CD8-positive, alpha-beta T cell (primary cell): ENCODE measurements at regions of chr3 and their contacts with region 1.

Region 1: DNA sequence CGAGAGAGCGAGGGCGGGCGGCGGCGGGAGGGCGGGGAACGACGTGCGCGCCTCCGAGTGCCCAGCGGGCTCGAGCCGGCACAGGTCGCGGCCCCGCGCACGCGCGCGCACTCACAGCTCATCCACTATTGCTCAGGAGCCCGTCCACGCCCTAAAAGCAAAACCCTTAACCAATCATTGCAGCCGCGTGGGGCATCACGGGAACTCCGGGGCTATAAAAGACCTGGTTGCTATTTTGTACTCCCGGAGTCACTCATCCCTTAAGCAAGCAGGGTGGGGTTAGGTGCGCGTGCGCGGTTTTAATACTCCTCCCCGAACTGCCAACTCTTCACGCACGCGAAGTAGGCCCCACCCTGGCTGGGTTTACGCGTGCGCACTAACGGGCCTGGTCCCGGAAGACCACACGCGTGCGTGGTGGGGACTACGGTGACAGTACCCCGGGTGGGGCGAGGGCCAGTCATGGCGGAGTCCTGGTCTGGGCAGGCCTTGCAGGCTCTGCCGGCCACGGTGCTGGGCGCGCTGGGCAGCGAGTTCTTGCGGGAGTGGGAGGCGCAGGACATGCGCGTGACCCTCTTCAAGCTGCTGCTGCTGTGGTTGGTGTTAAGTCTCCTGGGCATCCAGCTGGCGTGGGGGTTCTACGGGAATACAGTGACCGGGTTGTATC is at the starts of genes RHOA and TCTA:
- DNase-seq: peak; percentile 97 to 100 (median 99)
- ATAC-seq: peak; percentile 85
- H3K4me3 ChIP-seq: peak within 1 kb of the TSS; percentile 81 to 91
- H3K4me3 Mint-ChIP-seq: peak within 1 kb of the TSS; percentile 94
- H3K27ac ChIP-seq: peak within 1 kb of the TSS; percentile 89 to 94
- H3K27ac Mint-ChIP-seq: peak within 1 kb of the TSS; percentile 98
- H3K4me1 ChIP-seq: peaks cover 70% of the 10 kb centered on the region
- H3K4me1 Mint-ChIP-seq: peaks cover 70% of the 10 kb centered on the region
- H3K27me3 ChIP-seq: no peaks in the 10 kb centered on the region
- H3K27me3 Mint-ChIP-seq: no peaks in the 10 kb centered on the region
- CTCF ChIP-seq: no peak
- total RNA-seq, gene RHOA: 271 to 294 TPM
- total RNA-seq, gene TCTA: 19.8 to 21.1 TPM

Region 2: DNA sequence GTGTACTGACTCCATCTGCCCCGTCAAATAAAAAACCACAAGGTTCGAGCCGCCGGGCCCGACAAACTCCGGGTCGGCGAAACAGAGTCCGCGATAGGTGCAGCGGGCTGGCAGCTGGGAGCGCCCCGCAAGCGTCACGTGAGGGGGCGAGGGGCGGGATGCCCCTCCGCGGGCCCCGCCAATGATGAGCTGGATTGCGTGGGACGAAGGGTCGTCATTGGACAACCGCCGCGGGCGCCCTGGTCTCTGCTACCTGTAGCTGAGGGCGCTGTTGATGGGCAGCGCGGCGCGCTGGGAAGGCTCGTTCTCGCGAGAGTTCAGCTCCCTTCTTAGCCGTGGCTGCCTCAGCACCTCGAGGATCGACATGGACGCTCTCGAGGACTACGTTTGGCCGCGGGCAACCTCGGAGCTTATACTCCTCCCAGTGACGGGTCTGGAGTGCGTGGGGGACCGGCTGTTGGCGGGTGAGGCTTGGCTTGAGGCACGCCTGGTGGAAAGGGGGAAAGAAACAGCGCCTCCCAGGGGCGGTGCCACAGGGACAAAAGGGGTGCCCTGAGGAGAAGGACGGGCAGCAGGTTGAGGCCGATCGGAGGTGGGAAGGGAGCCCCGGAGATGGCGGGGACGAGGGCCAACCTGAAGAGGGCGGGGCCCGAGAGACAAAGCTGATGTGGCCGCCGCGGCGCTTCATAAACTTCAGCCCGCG is 404.9 kb before region 1 on chr3 and contains the start of gene WDR6:
- CTCF ChIA-PET with region 1: no interaction called
- POLR2A ChIA-PET with region 1: no interaction called
- intact Hi-C with region 1: no loop called
- DNase-seq: peak; percentile 94 to 99 (median 96)
- ATAC-seq: peak; percentile 87
- H3K4me3 ChIP-seq: peak within 1 kb of the TSS; percentile 87 to 92
- H3K4me3 Mint-ChIP-seq: peak within 1 kb of the TSS; percentile 100
- H3K27ac ChIP-seq: peak within 1 kb of the TSS; percentile 81 to 92
- H3K27ac Mint-ChIP-seq: peak within 1 kb of the TSS; percentile 99
- H3K4me1 ChIP-seq: peaks cover 15% of the 10 kb centered on the region
- H3K4me1 Mint-ChIP-seq: peaks cover 30% of the 10 kb centered on the region
- H3K27me3 ChIP-seq: no peaks in the 10 kb centered on the region
- H3K27me3 Mint-ChIP-seq: no peaks in the 10 kb centered on the region
- CTCF ChIP-seq: peak; percentile 34
- total RNA-seq, gene WDR6: 112 to 130 TPM

Region 3: DNA sequence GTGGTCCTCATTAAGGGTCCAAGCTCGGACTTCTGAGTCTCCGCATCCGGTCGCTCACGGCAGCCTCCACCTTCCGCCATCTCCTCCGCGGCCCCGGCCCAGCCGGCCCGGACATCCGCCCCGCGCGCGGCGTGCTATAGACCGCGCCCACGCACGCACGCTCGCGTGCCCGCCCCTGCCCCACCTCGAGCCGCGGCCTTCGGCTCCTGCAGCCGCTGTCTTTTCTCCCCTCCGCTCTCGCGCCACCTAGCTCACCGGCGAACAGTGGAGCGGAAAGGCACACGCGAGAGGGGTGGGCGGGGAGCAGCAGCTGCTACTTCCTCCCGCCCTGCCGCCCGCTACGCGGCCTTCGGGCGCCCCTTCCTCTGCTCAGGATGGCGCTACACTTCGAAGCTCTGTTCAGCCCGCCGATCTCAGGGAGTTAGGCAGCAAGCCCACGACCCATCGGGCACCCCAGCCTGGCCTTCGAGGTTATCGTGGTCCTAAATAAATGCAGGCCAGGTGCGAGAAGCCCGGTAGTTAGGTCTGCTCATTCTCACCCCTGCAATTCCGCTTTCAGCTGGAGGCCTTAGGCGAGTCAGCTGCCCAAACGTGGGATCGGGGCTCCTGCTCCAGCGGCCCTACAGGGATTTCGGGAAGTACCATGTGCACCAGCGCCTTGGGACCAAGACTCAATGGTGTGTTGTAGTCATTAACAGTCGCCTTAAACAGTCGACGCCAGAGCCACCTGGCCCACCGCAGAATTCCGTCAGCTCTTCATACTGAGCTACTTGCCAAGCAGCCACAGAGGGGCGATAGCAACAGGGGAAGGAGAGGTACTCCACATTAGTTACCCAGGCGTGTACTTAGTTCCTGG is 71.9 kb before region 1 on chr3 and contains the start of gene USP4:
- CTCF ChIA-PET with region 1: interaction called, 7 read pairs
- POLR2A ChIA-PET with region 1: interaction called, 43 read pairs
- intact Hi-C with region 1: loop called (anchors 1 kb)
- DNase-seq: peak; percentile 79 to 97 (median 90)
- ATAC-seq: peak; percentile 85
- H3K4me3 ChIP-seq: peak within 1 kb of the TSS; percentile 78 to 89
- H3K4me3 Mint-ChIP-seq: peak within 1 kb of the TSS; percentile 93
- H3K27ac ChIP-seq: peak within 1 kb of the TSS; percentile 98
- H3K27ac Mint-ChIP-seq: peak within 1 kb of the TSS; percentile 96
- H3K4me1 ChIP-seq: peaks cover 40% of the 10 kb centered on the region
- H3K4me1 Mint-ChIP-seq: peaks cover 48% of the 10 kb centered on the region
- H3K27me3 ChIP-seq: no peaks in the 10 kb centered on the region
- H3K27me3 Mint-ChIP-seq: no peaks in the 10 kb centered on the region
- CTCF ChIP-seq: peak; percentile 36
- total RNA-seq, gene USP4: 78.0 to 92.4 TPM

Region 4: DNA sequence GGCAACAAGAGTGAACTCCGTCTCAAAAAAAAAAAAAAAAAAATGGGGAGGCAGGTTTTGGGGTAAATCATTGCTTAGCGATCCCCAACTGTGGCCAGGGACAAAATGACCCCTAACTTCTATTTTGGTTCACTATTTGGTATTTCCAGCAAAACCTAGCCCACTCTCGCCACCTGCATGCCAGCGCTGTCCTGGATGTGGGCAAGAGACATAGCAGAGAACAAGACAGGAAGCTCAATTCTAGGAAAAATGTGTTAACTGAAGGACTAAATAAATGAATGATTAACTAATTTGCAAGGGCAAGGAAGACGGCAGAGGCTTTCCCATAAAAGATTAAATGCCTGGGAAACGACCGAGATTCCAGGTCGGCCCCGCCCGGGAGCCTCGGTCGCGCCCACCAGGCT is 16.6 kb after region 1 on chr3:
- CTCF ChIA-PET with region 1: interaction called, 13 read pairs
- POLR2A ChIA-PET with region 1: interaction called, 15 read pairs
- intact Hi-C with region 1: loop called (anchors 1 kb)
- DNase-seq: no peak
- ATAC-seq: peak; percentile 2
- H3K4me3 ChIP-seq: peak overlapping the region; percentile 63 to 85
- H3K4me3 Mint-ChIP-seq: peak overlapping the region; percentile 89
- H3K27ac ChIP-seq: peak overlapping the region; percentile 70 to 86
- H3K27ac Mint-ChIP-seq: peak overlapping the region; percentile 89
- H3K4me1 ChIP-seq: peaks cover 10% of the 10 kb centered on the region
- H3K4me1 Mint-ChIP-seq: peaks cover 14% of the 10 kb centered on the region
- H3K27me3 ChIP-seq: no peaks in the 10 kb centered on the region
- H3K27me3 Mint-ChIP-seq: no peaks in the 10 kb centered on the region
- CTCF ChIP-seq: no peak

Region 5: GRCh38 chr3:49454458-49454857 is 42.4 kb after region 1 on chr3:
- CTCF ChIA-PET with region 1: interaction called, 47 read pairs
- POLR2A ChIA-PET with region 1: interaction called, 9 read pairs
- intact Hi-C with region 1: loop called (anchors 1 kb)
- DNase-seq: no peak
- ATAC-seq: no peak
- H3K4me3 ChIP-seq: no peak overlapping the region
- H3K4me3 Mint-ChIP-seq: no peak overlapping the region
- H3K27ac ChIP-seq: no peak overlapping the region
- H3K27ac Mint-ChIP-seq: no peak overlapping the region
- H3K4me1 ChIP-seq: no peaks in the 10 kb centered on the region
- H3K4me1 Mint-ChIP-seq: no peaks in the 10 kb centered on the region
- H3K27me3 ChIP-seq: no peaks in the 10 kb centered on the region
- H3K27me3 Mint-ChIP-seq: no peaks in the 10 kb centered on the region
- CTCF ChIP-seq: no peak

Region 6: DNA sequence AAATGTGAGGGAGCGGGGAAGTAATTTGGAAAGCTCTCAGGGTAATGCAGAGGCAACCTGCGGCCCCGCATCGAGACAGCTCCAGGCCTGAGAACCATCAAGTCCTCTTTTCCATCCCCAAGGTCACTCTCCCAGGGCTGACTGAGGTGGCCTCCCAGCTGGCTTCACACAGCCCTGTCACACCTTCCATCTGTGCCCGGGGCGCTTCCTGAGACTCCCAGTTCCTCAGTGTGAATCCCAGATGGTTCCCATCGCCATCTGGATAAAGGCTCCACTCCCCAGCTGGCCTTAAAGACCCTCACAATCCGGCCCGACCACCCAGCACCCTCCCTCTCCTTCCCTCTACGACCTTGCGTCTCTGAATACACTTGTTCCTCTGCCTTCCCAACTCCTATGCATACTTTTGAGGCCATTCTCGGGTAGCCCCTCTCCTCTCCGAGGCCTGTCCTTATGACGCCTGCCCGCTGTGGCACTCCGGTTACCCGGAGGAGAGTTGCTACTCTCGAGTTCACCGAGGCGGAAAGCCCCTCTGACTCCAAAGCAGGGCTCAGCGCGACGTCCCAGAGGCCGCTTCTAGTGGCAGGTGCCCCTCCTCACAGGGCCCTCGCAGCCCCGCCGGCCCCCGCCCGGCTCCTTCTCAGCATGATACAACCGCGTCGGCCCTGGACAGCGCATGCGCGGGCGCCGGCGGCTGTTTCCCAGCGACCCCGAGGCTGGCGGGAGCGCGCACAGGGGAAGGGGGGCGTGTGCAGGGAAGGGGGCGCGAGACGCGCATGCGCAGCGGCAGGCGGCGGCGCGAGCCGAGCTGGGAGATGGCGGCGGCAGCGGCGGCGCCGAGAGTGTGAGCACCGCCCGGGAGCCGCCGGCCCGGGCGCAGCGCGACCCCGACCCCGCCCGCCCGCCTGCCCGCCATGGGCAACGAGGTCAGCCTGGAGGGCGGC is 141.9 kb after region 1 on chr3 and contains the start of gene BSN:
- CTCF ChIA-PET with region 1: no interaction called
- POLR2A ChIA-PET with region 1: no interaction called
- intact Hi-C with region 1: loop called in 1 of 2 experiments (anchors 5 kb)
- DNase-seq: peak; percentile 72 to 95 (median 93)
- ATAC-seq: peak; percentile 90
- H3K4me3 ChIP-seq: peak within 1 kb of the TSS; percentile 65 to 97
- H3K4me3 Mint-ChIP-seq: peak within 1 kb of the TSS; percentile 89
- H3K27ac ChIP-seq: peak within 1 kb of the TSS in 1 of 2 experiments; percentile 38
- H3K27ac Mint-ChIP-seq: peak within 1 kb of the TSS; percentile 64
- H3K4me1 ChIP-seq: peaks cover 13% of the 10 kb centered on the region
- H3K4me1 Mint-ChIP-seq: peaks cover 17% of the 10 kb centered on the region
- H3K27me3 ChIP-seq: peaks cover 0 to 2% of the 10 kb centered on the region in 2 experiments
- H3K27me3 Mint-ChIP-seq: peaks cover 21% of the 10 kb centered on the region
- CTCF ChIP-seq: no peak
- total RNA-seq, gene BSN: 0.17 to 0.35 TPM

Region 7: GRCh38 chr3:50298836-50299637 is 886.9 kb after region 1 on chr3 and contains the starts of genes HYAL3 and NAA80:
- CTCF ChIA-PET with region 1: no interaction called
- POLR2A ChIA-PET with region 1: no interaction called
- intact Hi-C with region 1: loop called in 1 of 2 experiments (anchors 10 kb)
- DNase-seq: peak; percentile 85 to 100 (median 99)
- ATAC-seq: peak; percentile 89
- H3K4me3 ChIP-seq: peak within 1 kb of the TSS; percentile 97
- H3K4me3 Mint-ChIP-seq: peak within 1 kb of the TSS; percentile 99
- H3K27ac ChIP-seq: peak within 1 kb of the TSS; percentile 93 to 94
- H3K27ac Mint-ChIP-seq: peak within 1 kb of the TSS; percentile 99
- H3K4me1 ChIP-seq: peaks cover 25% of the 10 kb centered on the region
- H3K4me1 Mint-ChIP-seq: peaks cover 28% of the 10 kb centered on the region
- H3K27me3 ChIP-seq: no peaks in the 10 kb centered on the region
- H3K27me3 Mint-ChIP-seq: no peaks in the 10 kb centered on the region
- CTCF ChIP-seq: peak; percentile 53
- total RNA-seq, gene HYAL3: 2.1 to 3.2 TPM
- total RNA-seq, gene NAA80: 37.1 to 40.7 TPM